Ovary (tissue), 10 donors: ENCODE measurements at regions of chr2 and their contacts with region 1.

Region 1: DNA sequence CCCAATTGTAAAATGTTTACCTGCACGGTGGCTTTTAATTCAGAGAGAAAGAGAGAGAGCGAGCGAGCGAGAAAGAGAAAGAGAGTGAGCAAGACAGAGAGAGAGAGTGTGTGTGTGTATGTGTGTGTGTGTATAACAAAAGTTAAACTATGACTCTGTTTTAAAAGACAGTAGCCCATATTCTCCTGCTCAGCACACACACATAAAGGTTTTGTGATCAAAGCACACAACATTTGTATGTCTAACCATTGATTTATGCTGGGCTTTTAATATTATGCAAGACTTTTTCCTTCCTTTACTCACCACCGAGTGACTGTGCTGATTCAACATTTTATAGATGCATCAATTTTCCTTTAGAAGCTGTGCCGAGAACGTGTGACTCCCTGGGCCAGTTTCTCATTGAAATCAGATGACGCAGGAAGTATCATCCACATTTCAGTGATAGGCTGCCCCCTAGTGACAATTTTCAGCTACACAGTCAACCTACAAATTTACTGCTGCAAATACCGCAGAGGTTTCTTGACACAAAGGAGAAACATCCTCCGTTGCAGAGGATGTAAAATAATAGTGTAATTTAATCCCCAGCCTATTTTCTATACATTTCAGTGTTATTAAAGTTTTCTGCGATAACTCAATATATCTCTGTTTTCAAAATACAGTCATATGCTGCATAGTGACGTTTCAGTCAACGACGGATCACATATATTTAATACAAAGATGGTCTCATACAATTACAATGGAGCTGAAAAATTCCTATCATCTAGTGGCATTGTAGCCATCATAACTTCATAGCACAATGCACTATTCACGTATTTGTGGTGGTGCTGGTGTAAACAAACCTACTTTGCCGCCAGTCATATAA is 165.9 kb upstream of the TANK start:
- DNase-seq: peak in 4 of 5 donors; percentile 47 to 89 (median 70)
- H3K4me3 ChIP-seq: no peak overlapping the region
- H3K27ac ChIP-seq: no peak overlapping the region
- H3K4me1 ChIP-seq: no peaks in the 10 kb centered on the region
- H3K27me3 ChIP-seq: no peaks in the 10 kb centered on the region
- CTCF ChIP-seq: peak; percentile 77 to 94 (median 91)
- EP300 ChIP-seq: no peak
- POLR2A ChIP-seq: no peak

Region 2: GRCh38 chr2:159286709-159287441 is 1707.5 kb before region 1 on chr2:
- intact Hi-C with region 1: loop called in 1 of 4 experiments (anchors 10 kb)
- DNase-seq: peak; percentile 98 to 99 (median 99)
- H3K4me3 ChIP-seq: peak overlapping the region; percentile 86
- H3K27ac ChIP-seq: peak overlapping the region; percentile 80 to 87
- H3K4me1 ChIP-seq: peaks cover 3% of the 10 kb centered on the region
- H3K27me3 ChIP-seq: no peaks in the 10 kb centered on the region
- CTCF ChIP-seq: no peak
- EP300 ChIP-seq: no peak
- POLR2A ChIP-seq: peak; percentile 43

Region 3: DNA sequence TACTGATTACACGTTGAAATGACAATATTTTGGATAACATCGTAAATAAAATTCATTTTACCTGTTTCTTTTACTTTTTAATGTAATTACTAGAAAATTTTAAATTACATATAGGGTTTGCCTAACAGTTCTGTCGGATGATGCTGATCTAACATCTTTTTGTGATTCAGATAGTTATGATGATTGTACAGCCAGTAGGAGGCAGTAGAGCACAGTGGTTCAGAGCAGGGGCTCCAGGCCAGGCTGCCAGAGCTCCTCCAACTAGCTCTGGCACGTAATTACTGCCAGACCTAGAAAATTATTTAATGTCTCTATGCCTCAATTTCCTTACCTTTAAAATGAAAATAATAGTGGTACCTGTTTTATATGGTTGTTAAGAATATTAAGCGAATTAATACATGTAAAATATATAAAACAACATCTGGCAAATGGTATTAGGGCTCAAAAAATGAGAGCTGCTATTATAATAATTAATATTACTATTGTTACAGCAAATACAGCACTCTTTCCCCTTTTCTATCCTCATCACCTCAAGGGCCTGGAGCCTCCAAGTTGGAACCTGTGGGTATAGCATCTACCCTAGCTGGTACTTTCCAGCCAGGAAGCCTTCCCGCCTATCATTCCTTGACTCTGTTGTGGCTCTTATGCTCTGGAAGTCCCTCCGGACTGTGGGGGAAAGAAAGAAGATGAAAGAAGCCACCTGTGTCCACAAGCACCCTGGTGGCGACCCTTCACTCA is 884.3 kb before region 1 on chr2:
- intact Hi-C with region 1: loop called in 2 of 4 experiments (anchors 10 kb)
- DNase-seq: peak; percentile 64 to 76 (median 69)
- H3K4me3 ChIP-seq: no peak overlapping the region
- H3K27ac ChIP-seq: no peak overlapping the region
- H3K4me1 ChIP-seq: no peaks in the 10 kb centered on the region
- H3K27me3 ChIP-seq: no peaks in the 10 kb centered on the region
- CTCF ChIP-seq: peak; percentile 74 to 91 (median 77)
- EP300 ChIP-seq: no peak
- POLR2A ChIP-seq: no peak